ENCODE measurements at regions of chr13 and their contacts with region 1.

Region 1: GRCh38 chr13:36420437-36420891 is 11.8 kb upstream of the CCNA1 start:
- DNase-seq: peak; percentile 83
- ATAC-seq: peak; percentile 96
- H3K4me3 Mint-ChIP-seq: no peak overlapping the region
- H3K27ac Mint-ChIP-seq: no peak overlapping the region
- H3K4me1 Mint-ChIP-seq: peaks cover 25% of the 10 kb centered on the region
- H3K27me3 Mint-ChIP-seq: peaks cover 37% of the 10 kb centered on the region

Region 2: GRCh38 chr13:36438594-36439483 is 18.4 kb after region 1 on chr13:
- CTCF ChIA-PET with region 1: interaction called, 13 read pairs
- POLR2A ChIA-PET with region 1: no interaction called
- DNase-seq: no peak
- ATAC-seq: no peak
- H3K4me3 Mint-ChIP-seq: peak overlapping the region; percentile 54
- H3K27ac Mint-ChIP-seq: no peak overlapping the region
- H3K4me1 Mint-ChIP-seq: peaks cover 10% of the 10 kb centered on the region
- H3K27me3 Mint-ChIP-seq: peaks cover 14% of the 10 kb centered on the region

Measured in activated CD8-positive, alpha-beta T cell treated with anti-CD3 and anti-CD28 coated beads, Interleukin-2, amount 10 ng/mL, durations not matched to agents 7 days and 5 days (primary cell).